Activated CD4-positive, alpha-beta memory T cell treated with anti-CD3 and anti-CD28 coated beads, Interleukin-2, amount 10 ng/mL, durations not matched to agents 7 days and 5 days (primary cell): ENCODE measurements at regions of chr7 and their contacts with region 1.

Region 1: DNA sequence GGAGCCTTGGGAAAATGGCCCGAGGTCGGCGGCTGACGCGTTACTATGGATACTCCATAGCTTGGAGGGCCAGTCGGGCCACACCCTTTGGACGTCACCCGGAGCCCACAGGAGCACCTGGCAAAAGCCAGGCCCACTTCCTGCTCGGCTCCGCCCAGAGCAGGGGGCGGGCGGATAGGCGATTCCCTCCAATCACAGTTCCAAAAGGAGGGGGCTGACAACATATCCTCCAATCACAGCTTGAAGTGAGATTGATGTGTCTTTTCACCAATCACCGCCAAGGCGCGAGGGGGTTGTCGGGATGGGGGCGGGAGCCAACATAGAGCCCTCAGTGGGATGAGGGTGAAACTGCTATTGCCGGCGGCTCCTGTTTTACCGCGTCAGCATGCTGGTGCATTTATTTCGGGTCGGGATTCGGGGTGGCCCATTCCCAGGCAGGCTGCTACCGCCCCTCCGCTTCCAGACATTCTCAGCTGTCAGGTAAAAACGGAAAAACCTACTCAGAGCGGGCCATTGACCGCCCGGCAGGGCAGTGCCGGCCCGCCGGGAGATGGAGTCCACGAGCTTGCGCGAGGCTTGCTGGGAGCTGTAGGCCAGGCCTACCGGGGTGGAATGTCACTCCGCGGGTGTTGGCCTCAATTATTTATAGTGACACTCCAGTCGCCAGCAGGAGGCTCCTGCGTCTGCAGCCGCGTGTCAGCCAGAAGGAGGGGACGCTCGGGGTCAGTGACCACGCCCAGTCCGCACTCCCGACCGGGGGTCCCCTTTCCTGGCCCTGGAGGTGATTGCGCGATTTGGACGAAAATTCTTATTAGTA is at the start of gene ABCB8:
- DNase-seq: peak; percentile 99
- H3K4me3 Mint-ChIP-seq: peak within 1 kb of the TSS; percentile 95
- H3K27ac Mint-ChIP-seq: peak within 1 kb of the TSS; percentile 85
- H3K4me1 Mint-ChIP-seq: peaks cover 31% of the 10 kb centered on the region
- H3K27me3 Mint-ChIP-seq: no peaks in the 10 kb centered on the region
- total RNA-seq, gene ABCB8: 51.2 to 53.3 TPM

Region 2: GRCh38 chr7:151008511-151009323 is 19.6 kb before region 1 on chr7:
- CTCF ChIA-PET with region 1: interaction called, 30 read pairs
- POLR2A ChIA-PET with region 1: interaction called, 50 read pairs
- DNase-seq: peak; percentile 79
- H3K4me3 Mint-ChIP-seq: peak overlapping the region; percentile 76
- H3K27ac Mint-ChIP-seq: peak overlapping the region; percentile 92
- H3K4me1 Mint-ChIP-seq: peaks cover 67% of the 10 kb centered on the region
- H3K27me3 Mint-ChIP-seq: peaks cover 2% of the 10 kb centered on the region

Region 3: GRCh38 chr7:151017953-151018420 is 10.4 kb before region 1 on chr7:
- CTCF ChIA-PET with region 1: interaction called, 38 read pairs
- POLR2A ChIA-PET with region 1: interaction called, 50 read pairs
- DNase-seq: peak; percentile 82
- H3K4me3 Mint-ChIP-seq: peak overlapping the region; percentile 66
- H3K27ac Mint-ChIP-seq: no peak overlapping the region
- H3K4me1 Mint-ChIP-seq: peaks cover 61% of the 10 kb centered on the region
- H3K27me3 Mint-ChIP-seq: peaks cover 32% of the 10 kb centered on the region

Region 4: GRCh38 chr7:151038951-151039849 is 10.9 kb after region 1 on chr7:
- CTCF ChIA-PET with region 1: interaction called, 10 read pairs
- POLR2A ChIA-PET with region 1: interaction called, 5 read pairs
- DNase-seq: peak; percentile 56
- H3K4me3 Mint-ChIP-seq: no peak overlapping the region
- H3K27ac Mint-ChIP-seq: peak overlapping the region; percentile 41
- H3K4me1 Mint-ChIP-seq: peaks cover 14% of the 10 kb centered on the region
- H3K27me3 Mint-ChIP-seq: no peaks in the 10 kb centered on the region

Region 5: GRCh38 chr7:151057989-151058780 is 29.8 kb after region 1 on chr7:
- CTCF ChIA-PET with region 1: interaction called, 10 read pairs
- POLR2A ChIA-PET with region 1: interaction called, 10 read pairs
- DNase-seq: peak; percentile 98
- H3K4me3 Mint-ChIP-seq: peak overlapping the region; percentile 84
- H3K27ac Mint-ChIP-seq: peak overlapping the region; percentile 94
- H3K4me1 Mint-ChIP-seq: peaks cover 52% of the 10 kb centered on the region
- H3K27me3 Mint-ChIP-seq: no peaks in the 10 kb centered on the region

Region 6: GRCh38 chr7:151080522-151081169 is 52.3 kb after region 1 on chr7 and contains the start of gene FASTK:
- CTCF ChIA-PET with region 1: interaction called, 9 read pairs
- POLR2A ChIA-PET with region 1: interaction called, 11 read pairs
- DNase-seq: peak; percentile 90
- H3K4me3 Mint-ChIP-seq: peak within 1 kb of the TSS; percentile 88
- H3K27ac Mint-ChIP-seq: peak within 1 kb of the TSS; percentile 74
- H3K4me1 Mint-ChIP-seq: peaks cover 43% of the 10 kb centered on the region
- H3K27me3 Mint-ChIP-seq: peaks cover 9% of the 10 kb centered on the region
- total RNA-seq, gene FASTK: 70.0 to 72.7 TPM

Region 7: DNA sequence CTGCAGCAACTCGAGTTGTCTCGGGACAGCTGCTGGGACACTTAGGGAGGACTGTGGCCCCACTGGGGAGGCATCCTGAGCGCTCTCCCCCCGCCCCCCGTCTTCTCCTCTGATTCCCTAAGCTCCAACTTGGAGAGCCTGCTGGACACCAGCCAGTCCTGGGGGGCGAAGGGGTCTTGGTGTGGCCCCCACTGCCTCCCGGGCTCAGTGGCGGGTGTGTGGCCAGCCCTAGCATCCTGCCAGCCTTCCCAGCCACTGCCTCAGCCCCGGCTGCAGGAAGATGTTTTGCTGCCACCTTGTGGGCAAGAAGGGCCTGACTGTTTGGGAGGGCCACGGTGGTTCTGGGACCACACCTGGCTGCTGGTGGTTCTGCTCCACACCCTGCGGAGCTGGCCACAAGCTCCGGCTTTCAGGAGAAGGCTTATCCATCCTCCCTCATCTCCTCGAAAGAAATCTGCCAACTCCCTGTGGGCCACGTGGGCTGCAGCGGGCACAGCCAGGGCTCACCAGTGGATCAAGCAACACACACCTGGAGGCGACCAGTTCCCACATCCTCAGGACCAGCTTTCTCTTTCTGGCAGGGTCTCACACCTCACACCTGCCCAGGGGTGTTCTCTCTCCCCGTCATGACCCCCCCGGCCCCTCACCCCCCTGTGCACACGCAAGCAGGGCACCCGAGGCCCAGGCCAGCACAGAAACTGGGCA is 82.8 kb after region 1 on chr7:
- CTCF ChIA-PET with region 1: interaction called, 21 read pairs
- POLR2A ChIA-PET with region 1: no interaction called
- DNase-seq: peak; percentile 78
- H3K4me3 Mint-ChIP-seq: no peak overlapping the region
- H3K27ac Mint-ChIP-seq: no peak overlapping the region
- H3K4me1 Mint-ChIP-seq: peaks cover 8% of the 10 kb centered on the region
- H3K27me3 Mint-ChIP-seq: peaks cover 11% of the 10 kb centered on the region

Region 8: GRCh38 chr7:151130741-151131157 is 102.4 kb after region 1 on chr7:
- CTCF ChIA-PET with region 1: no interaction called
- POLR2A ChIA-PET with region 1: no interaction called
- DNase-seq: no peak
- H3K4me3 Mint-ChIP-seq: no peak overlapping the region
- H3K27ac Mint-ChIP-seq: no peak overlapping the region
- H3K4me1 Mint-ChIP-seq: no peaks in the 10 kb centered on the region
- H3K27me3 Mint-ChIP-seq: no peaks in the 10 kb centered on the region

Region 9: DNA sequence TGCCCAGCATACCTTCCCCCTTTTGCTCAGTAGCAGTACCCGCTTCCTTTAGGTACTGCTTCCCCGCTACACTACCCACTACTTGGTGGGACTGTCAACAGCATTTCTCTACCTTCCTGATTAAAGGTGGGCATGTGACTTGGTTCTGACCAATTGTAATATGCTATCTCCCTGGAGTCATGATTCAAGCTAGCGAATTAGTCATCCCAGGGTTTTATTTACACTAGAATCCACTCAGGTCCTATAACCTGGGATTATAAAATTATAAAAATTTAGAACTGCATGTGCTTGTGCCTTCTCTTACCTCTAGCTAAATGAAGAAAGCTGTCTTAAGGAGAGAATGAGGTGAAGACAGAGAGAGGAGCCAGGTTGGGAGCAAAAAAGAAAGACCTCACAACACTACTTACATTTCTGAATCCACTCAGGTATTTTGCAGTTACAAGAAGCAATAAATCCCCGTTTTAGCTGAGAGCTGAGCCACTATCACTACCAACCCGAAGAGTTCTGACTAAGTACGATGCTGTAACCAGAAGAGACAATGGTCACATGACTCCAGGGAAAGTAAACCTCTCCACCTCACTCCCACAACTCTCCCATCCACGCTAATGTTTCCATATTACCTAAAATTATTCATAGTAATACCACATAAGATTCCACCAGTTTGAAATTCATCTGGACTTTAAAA is 129.4 kb after region 1 on chr7:
- CTCF ChIA-PET with region 1: no interaction called
- POLR2A ChIA-PET with region 1: no interaction called
- DNase-seq: no peak
- H3K4me3 Mint-ChIP-seq: no peak overlapping the region
- H3K27ac Mint-ChIP-seq: no peak overlapping the region
- H3K4me1 Mint-ChIP-seq: no peaks in the 10 kb centered on the region
- H3K27me3 Mint-ChIP-seq: peaks cover 34% of the 10 kb centered on the region

Region 10: DNA sequence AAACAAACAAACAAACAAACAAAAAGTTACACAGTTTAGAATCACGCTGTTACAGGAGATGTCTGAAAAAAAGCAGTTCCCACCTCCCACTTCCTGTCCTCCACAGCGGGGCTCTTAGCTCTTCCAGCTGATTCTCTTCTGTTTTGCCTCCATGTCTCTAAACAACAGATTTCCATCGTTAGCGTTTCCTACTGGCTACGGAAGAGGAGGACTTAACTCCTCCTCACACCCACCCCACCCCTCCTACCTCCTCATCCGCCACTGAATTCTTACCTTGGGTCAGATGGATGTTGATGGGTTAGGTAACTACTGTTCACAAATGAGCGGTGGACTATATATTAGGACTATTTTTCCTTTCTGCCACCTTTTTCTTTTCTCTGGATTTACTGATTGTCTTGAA is 276.5 kb after region 1 on chr7:
- CTCF ChIA-PET with region 1: no interaction called
- POLR2A ChIA-PET with region 1: no interaction called
- DNase-seq: no peak
- H3K4me3 Mint-ChIP-seq: no peak overlapping the region
- H3K27ac Mint-ChIP-seq: no peak overlapping the region
- H3K4me1 Mint-ChIP-seq: peaks cover 13% of the 10 kb centered on the region
- H3K27me3 Mint-ChIP-seq: peaks cover 18% of the 10 kb centered on the region